ENCODE measurements at regions of chr2 and their contacts with region 1.

Region 1: DNA sequence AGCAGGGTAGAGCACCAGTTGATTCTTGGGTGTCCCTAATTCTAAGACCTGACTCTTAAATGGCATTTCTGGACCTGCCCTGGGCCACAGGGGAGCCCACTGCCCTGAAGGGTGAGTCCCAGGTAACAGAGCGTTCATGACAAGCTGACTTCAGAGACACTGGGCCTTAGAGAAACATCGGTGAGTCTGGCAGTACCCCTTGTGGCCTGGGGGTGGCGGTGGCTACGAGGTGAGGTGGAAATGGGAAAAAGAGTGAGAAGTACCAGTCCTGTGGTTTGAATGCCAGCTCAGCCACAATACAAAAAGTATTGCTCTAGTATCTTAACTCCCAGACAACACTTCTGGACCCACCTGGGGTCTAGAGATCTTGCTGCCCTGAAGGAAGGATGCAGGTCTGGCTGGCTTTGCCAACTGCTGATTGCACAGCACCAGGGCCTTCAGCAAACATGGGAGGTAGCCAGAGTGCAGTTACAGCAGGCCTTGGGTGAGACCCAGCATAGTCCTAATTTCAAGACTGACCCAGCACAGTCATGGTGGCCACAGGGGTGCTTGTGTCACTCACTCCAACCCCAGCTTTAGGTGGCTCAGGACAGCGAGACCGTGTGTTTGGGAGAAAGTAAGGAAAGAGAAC is 44.5 kb downstream of the USP34 start:
- DNase-seq: peak; percentile 51 to 87 (median 76)
- ATAC-seq: peak; percentile 91
- H3K4me3 ChIP-seq: no peak overlapping the region
- H3K4me3 Mint-ChIP-seq: peak overlapping the region; percentile 59
- H3K27ac ChIP-seq: peak overlapping the region; percentile 47 to 77
- H3K27ac Mint-ChIP-seq: peak overlapping the region; percentile 94
- H3K4me1 ChIP-seq: peaks cover 43% of the 10 kb centered on the region
- H3K4me1 Mint-ChIP-seq: peaks cover 72% of the 10 kb centered on the region
- H3K27me3 ChIP-seq: no peaks in the 10 kb centered on the region
- H3K27me3 Mint-ChIP-seq: no peaks in the 10 kb centered on the region
- CTCF ChIP-seq: peak; percentile 74

Region 2: DNA sequence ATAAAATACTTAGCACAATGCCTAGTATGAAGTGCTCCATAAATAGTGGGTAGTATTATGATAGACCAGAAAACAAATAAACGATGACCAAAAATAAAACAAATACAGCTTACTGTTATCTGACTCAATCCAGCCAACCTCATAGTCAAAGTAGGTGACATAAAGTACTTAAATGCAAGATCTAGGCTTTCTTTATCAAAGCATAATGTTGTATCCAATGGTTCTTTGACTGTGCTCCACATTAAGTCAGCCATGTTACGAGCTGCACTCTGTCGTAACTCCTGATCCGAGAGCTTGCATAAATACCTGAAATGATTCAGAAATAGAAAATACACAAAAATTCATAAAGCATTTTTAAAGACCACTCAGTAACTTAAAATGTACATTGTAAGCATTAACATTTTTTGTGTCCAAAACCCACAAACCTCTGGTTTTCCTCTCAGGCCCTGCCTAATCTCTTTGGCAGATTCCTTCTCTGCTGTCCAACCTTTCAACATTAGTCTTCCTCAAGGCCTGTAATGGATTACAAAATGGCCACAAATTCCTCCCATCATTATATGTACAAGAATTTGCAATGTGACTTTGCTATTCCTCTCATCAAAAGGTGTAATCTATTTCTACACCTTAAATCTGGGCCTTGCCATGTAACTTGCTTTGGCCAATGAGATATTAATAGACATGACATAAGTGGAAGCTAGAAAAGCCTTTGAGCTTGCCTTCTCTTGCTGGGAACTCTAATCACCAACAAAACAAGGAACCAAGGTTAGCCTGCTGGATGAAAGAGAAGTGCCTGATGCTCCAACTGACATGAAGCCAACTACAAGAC is 46.1 kb before region 1 on chr2:
- CTCF ChIA-PET with region 1: no interaction called
- POLR2A ChIA-PET with region 1: no interaction called
- intact Hi-C with region 1: no loop called
- DNase-seq: no peak
- ATAC-seq: no peak
- H3K4me3 ChIP-seq: no peak overlapping the region
- H3K4me3 Mint-ChIP-seq: no peak overlapping the region
- H3K27ac ChIP-seq: no peak overlapping the region
- H3K27ac Mint-ChIP-seq: no peak overlapping the region
- H3K4me1 ChIP-seq: no peaks in the 10 kb centered on the region
- H3K4me1 Mint-ChIP-seq: peaks cover 13% of the 10 kb centered on the region
- H3K27me3 ChIP-seq: no peaks in the 10 kb centered on the region
- H3K27me3 Mint-ChIP-seq: no peaks in the 10 kb centered on the region
- CTCF ChIP-seq: no peak

Region 3: DNA sequence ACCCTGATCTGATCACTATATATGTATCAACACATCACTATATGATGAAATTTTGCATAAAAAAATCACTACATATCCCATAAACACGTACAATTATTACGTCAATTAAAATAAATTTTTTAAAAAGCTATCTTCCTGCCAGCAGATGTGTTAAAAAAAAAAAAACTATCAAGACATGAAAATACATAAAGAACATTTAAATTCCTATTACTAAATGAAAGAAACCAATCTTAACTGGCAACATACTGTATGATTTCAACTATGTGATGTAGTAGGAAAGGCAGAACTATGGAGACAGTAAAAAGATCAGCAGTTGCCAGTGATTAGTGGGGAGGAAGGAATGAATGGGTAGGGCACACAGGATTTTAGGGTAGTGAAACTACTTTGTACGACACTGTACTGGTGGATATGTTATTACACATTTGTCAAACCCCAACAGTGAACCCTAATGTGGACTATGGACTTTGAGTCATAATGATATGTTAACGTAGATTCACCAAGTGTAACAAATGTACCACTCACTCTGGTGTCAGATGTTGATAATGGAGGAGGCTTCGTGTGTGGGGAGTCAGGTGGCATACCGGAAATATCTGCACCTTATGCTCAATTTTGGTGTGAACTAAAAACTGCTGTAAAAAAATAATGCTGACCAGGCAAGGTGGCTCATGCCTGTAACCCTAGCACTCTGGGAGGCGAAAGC is 17.1 kb after region 1 on chr2:
- CTCF ChIA-PET with region 1: interaction called, 15 read pairs
- POLR2A ChIA-PET with region 1: interaction called, 3 read pairs
- intact Hi-C with region 1: loop called in 1 of 2 experiments (anchors 1 kb)
- DNase-seq: peak in 1 of 9 experiments; percentile 25
- ATAC-seq: no peak
- H3K4me3 ChIP-seq: no peak overlapping the region
- H3K4me3 Mint-ChIP-seq: peak overlapping the region; percentile 10
- H3K27ac ChIP-seq: no peak overlapping the region
- H3K27ac Mint-ChIP-seq: no peak overlapping the region
- H3K4me1 ChIP-seq: peaks cover 29% of the 10 kb centered on the region
- H3K4me1 Mint-ChIP-seq: peaks cover 72% of the 10 kb centered on the region
- H3K27me3 ChIP-seq: no peaks in the 10 kb centered on the region
- H3K27me3 Mint-ChIP-seq: no peaks in the 10 kb centered on the region
- CTCF ChIP-seq: no peak

Region 4: GRCh38 chr2:61485281-61485680 is 58.9 kb after region 1 on chr2:
- CTCF ChIA-PET with region 1: interaction called, 16 read pairs
- POLR2A ChIA-PET with region 1: interaction called, 5 read pairs
- intact Hi-C with region 1: loop called (anchors 5 kb)
- DNase-seq: no peak
- ATAC-seq: no peak
- H3K4me3 ChIP-seq: no peak overlapping the region
- H3K4me3 Mint-ChIP-seq: no peak overlapping the region
- H3K27ac ChIP-seq: no peak overlapping the region
- H3K27ac Mint-ChIP-seq: no peak overlapping the region
- H3K4me1 ChIP-seq: no peaks in the 10 kb centered on the region
- H3K4me1 Mint-ChIP-seq: no peaks in the 10 kb centered on the region
- H3K27me3 ChIP-seq: no peaks in the 10 kb centered on the region
- H3K27me3 Mint-ChIP-seq: no peaks in the 10 kb centered on the region
- CTCF ChIP-seq: no peak

Region 5: DNA sequence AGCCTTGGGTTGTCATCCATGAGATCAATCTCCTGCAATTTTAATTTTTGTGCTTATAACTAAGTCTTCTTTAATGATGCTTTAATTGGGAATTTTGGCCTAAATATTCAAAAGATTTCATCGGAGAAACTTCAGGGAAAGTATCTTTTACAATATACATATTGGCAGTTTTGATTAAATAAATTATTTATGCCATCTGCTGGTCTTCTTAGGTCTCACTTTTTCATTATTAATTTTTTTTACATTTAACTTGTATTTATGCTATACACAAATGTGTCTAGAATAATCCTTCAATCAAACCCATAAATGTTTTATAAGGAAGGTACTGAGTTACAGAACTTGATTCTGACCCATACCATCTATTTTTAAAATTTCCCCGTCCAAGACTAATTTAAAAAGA is 206.9 kb after region 1 on chr2:
- CTCF ChIA-PET with region 1: interaction called, 3 read pairs
- POLR2A ChIA-PET with region 1: no interaction called
- intact Hi-C with region 1: loop called in 1 of 2 experiments (anchors 10 kb)
- DNase-seq: no peak
- ATAC-seq: no peak
- H3K4me3 ChIP-seq: no peak overlapping the region
- H3K4me3 Mint-ChIP-seq: no peak overlapping the region
- H3K27ac ChIP-seq: no peak overlapping the region
- H3K27ac Mint-ChIP-seq: no peak overlapping the region
- H3K4me1 ChIP-seq: no peaks in the 10 kb centered on the region
- H3K4me1 Mint-ChIP-seq: no peaks in the 10 kb centered on the region
- H3K27me3 ChIP-seq: no peaks in the 10 kb centered on the region
- H3K27me3 Mint-ChIP-seq: no peaks in the 10 kb centered on the region
- CTCF ChIP-seq: no peak

Region 6: DNA sequence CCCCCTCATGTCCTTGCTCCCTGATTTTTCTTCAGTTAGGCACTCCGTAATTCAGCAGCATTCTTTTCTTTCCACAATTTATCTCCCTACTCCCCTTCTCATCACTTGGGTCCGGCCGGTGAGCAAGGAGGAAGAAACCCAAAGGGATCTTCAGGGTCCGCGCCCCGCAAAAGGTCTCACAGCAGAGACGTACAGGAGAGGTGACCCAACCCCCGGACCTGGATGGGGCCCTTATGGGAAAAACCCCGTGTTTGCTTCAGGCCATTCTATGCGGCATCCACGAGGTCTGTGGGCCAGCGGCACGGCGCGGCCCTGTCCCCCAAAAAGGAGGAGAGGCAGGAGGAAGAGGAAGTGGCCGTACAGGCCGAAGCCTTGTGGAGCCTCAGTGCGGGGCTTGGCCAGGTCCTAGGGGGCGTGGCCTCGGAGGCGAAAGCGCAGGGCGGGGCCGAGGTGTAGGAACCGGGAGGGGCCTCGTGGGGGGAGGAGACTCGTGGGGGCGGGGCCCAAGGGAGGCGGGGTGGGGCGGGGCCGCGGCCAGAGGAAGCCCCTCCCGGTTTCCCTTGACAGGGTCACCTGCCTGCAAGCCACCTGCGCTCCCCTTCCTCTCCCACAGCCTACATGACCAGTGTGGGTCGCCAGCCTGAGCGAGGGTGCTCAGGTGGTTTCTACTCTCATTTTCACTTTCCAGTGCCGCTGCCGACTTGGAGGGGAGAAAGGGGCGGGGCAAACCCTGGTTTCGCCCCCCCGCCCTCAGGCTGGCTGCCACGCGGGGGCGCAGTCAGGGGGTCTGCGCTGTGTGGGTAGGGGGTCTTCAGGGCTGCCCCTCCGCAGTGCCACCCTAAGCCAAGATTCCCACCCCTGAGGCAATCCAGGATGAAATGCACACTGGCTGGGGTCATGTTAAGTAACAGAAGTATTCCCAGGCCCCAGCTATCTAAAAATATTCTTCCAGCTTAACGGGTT is 268.2 kb after region 1 on chr2:
- CTCF ChIA-PET with region 1: no interaction called
- POLR2A ChIA-PET with region 1: no interaction called
- intact Hi-C with region 1: loop called in 1 of 2 experiments (anchors 1 kb)
- DNase-seq: peak; percentile 65 to 89 (median 82)
- ATAC-seq: peak; percentile 95
- H3K4me3 ChIP-seq: peak overlapping the region; percentile 88 to 93
- H3K4me3 Mint-ChIP-seq: peak overlapping the region; percentile 90
- H3K27ac ChIP-seq: peak overlapping the region; percentile 43 to 63
- H3K27ac Mint-ChIP-seq: peak overlapping the region; percentile 87
- H3K4me1 ChIP-seq: peaks cover 14% of the 10 kb centered on the region
- H3K4me1 Mint-ChIP-seq: peaks cover 16% of the 10 kb centered on the region
- H3K27me3 ChIP-seq: no peaks in the 10 kb centered on the region
- H3K27me3 Mint-ChIP-seq: no peaks in the 10 kb centered on the region
- CTCF ChIP-seq: peak; percentile 52

Region 7: GRCh38 chr2:61854474-61855182 is 428.2 kb after region 1 on chr2:
- CTCF ChIA-PET with region 1: no interaction called
- POLR2A ChIA-PET with region 1: no interaction called
- intact Hi-C with region 1: loop called (anchors 1 to 5 kb)
- DNase-seq: peak; percentile 80 to 98 (median 87)
- ATAC-seq: peak; percentile 89
- H3K4me3 ChIP-seq: peak overlapping the region; percentile 79 to 88
- H3K4me3 Mint-ChIP-seq: peak overlapping the region; percentile 97
- H3K27ac ChIP-seq: peak overlapping the region; percentile 64 to 81
- H3K27ac Mint-ChIP-seq: peak overlapping the region; percentile 96
- H3K4me1 ChIP-seq: peaks cover 12% of the 10 kb centered on the region
- H3K4me1 Mint-ChIP-seq: peaks cover 15% of the 10 kb centered on the region
- H3K27me3 ChIP-seq: no peaks in the 10 kb centered on the region
- H3K27me3 Mint-ChIP-seq: no peaks in the 10 kb centered on the region
- CTCF ChIP-seq: no peak

Region 8: GRCh38 chr2:62084801-62085200 is 658.4 kb after region 1 on chr2:
- CTCF ChIA-PET with region 1: no interaction called
- POLR2A ChIA-PET with region 1: no interaction called
- intact Hi-C with region 1: no loop called
- DNase-seq: no peak
- ATAC-seq: no peak
- H3K4me3 ChIP-seq: no peak overlapping the region
- H3K4me3 Mint-ChIP-seq: no peak overlapping the region
- H3K27ac ChIP-seq: no peak overlapping the region
- H3K27ac Mint-ChIP-seq: no peak overlapping the region
- H3K4me1 ChIP-seq: no peaks in the 10 kb centered on the region
- H3K4me1 Mint-ChIP-seq: no peaks in the 10 kb centered on the region
- H3K27me3 ChIP-seq: no peaks in the 10 kb centered on the region
- H3K27me3 Mint-ChIP-seq: no peaks in the 10 kb centered on the region
- CTCF ChIP-seq: no peak